SK-N-SH (cell line): ENCODE measurements at regions of chr3 and their contacts with region 1.

Region 1: DNA sequence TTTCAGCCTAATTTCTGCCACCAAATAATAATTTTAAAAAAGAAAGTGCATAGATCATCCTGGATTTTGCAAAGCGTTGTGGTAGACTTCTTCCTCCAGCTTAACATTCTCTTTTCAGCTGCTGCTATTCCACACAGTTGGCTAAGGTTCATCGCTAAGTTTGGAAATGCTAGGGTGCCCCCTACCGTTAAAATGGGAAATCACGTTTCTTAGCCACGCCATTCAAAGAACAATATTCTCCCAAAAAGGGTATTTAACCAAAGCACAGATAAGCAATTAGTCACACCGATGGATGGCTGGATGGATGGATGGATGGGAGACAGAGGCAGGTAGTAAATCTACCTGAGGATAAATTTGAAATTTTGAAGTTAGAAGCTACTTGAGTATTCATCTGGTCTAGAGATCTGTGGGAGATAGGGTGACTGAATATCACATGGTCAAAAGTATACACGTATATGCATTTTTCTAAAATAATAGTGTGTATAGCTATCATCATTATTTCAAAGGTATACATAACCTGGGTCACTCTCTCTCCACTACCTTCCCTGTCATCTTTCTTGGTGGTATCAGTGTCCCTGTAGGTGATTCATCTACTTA is 67.2 kb downstream of the EFHB start:
- DNase-seq: peak; percentile 61
- H3K4me3 ChIP-seq: peak overlapping the region in 1 of 2 experiments; percentile 46; a peak in 1 of 4 replicates
- H3K27ac ChIP-seq: no peak overlapping the region
- H3K4me1 ChIP-seq: no peaks in the 10 kb centered on the region
- H3K27me3 ChIP-seq: no peaks in the 10 kb centered on the region
- CTCF ChIP-seq: peak; percentile 83
- EP300 ChIP-seq: no peak
- RAD21 ChIP-seq: peak; percentile 90

Region 2: DNA sequence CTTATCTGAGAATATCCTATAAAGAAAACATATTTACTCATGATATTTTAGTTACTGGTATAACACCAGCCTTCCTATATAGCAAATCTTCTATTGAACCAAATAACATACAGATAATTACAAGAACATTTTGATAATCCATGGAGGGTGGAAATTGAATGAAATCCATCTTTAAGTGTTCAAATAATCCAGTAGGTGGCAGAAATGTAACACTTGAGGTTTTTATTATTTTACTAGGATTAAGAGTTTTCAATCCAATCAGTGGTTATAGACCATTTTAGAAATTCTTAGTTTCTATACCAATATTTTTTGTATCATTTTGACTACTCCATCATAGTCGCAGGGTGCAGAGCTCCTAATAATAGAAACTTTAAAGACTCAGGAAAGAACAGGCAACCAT is 820.4 kb before region 1 on chr3:
- CTCF ChIA-PET with region 1: interaction called, 14 read pairs
- POLR2A ChIA-PET with region 1: no interaction called
- DNase-seq: peak; percentile 10
- H3K4me3 ChIP-seq: no peak overlapping the region
- H3K27ac ChIP-seq: no peak overlapping the region
- H3K4me1 ChIP-seq: no peaks in the 10 kb centered on the region
- H3K27me3 ChIP-seq: no peaks in the 10 kb centered on the region
- CTCF ChIP-seq: peak; percentile 52
- EP300 ChIP-seq: no peak
- RAD21 ChIP-seq: peak; percentile 58

Region 3: DNA sequence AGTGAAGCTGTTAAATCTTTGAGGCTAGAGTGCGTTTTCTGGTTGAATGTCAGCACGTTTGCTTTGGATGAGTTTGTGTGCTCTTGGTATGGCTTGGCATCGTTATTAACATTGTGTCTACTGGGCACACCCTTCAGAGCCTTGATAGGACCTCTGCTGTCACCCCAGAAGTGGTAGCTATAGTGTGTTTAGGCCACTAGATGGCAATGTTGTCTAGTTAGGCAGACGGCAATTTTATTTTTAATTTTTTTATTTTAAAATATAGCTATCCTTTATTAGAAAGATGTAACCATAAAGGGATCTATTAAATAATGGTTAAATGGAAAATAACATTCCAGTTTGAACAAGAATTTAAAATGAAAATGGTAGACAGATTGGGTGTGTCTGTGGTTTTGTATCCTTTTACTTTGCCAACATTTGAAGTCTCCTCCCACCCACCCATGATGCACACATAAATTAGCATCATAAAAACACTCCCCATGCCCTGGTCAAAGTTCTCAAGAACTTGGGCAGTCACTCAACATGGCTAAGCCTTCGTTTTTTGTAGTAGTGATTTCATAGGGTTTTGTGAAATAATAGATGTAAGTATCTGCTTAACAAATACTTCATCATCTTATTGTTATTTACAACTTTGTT is 517.8 kb before region 1 on chr3:
- CTCF ChIA-PET with region 1: interaction called, 25 read pairs
- POLR2A ChIA-PET with region 1: no interaction called
- DNase-seq: peak; percentile 20
- H3K4me3 ChIP-seq: no peak overlapping the region; a peak in 1 of 4 replicates
- H3K27ac ChIP-seq: no peak overlapping the region
- H3K4me1 ChIP-seq: no peaks in the 10 kb centered on the region; a peak in 2 of 4 replicates
- H3K27me3 ChIP-seq: no peaks in the 10 kb centered on the region
- CTCF ChIP-seq: peak; percentile 67
- EP300 ChIP-seq: no peak
- RAD21 ChIP-seq: peak; percentile 72

Region 4: DNA sequence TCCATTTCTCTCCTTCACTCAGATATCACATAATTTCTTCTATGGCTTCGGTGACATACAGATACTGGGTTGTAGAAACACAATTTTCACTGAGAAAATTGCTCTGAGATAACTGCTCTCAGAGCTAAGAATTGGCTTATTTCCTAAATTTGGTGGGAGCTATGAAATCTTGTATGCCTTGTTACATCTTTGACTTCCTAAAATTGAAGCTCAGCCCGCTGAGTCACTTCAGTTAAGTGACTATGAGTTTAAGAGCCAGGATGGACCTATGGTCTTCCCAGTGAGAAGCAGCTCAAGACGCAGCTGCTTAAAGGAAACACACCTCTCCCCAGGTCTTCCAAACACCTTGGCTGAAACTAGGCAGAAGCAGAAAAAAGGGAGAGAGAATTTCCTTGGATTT is 10.8 kb after region 1 on chr3:
- CTCF ChIA-PET with region 1: interaction called, 15 read pairs
- POLR2A ChIA-PET with region 1: interaction called, 3 read pairs
- DNase-seq: no peak
- H3K4me3 ChIP-seq: no peak overlapping the region
- H3K27ac ChIP-seq: no peak overlapping the region
- H3K4me1 ChIP-seq: no peaks in the 10 kb centered on the region
- H3K27me3 ChIP-seq: no peaks in the 10 kb centered on the region
- CTCF ChIP-seq: no peak
- EP300 ChIP-seq: no peak
- RAD21 ChIP-seq: no peak

Region 5: GRCh38 chr3:19891740-19892139 is 24.9 kb after region 1 on chr3:
- CTCF ChIA-PET with region 1: interaction called, 17 read pairs
- POLR2A ChIA-PET with region 1: no interaction called
- DNase-seq: no peak
- H3K4me3 ChIP-seq: no peak overlapping the region
- H3K27ac ChIP-seq: no peak overlapping the region
- H3K4me1 ChIP-seq: peaks cover 0 to 22% of the 10 kb centered on the region in 2 experiments; a peak in 2 of 4 replicates
- H3K27me3 ChIP-seq: no peaks in the 10 kb centered on the region
- CTCF ChIP-seq: no peak
- EP300 ChIP-seq: no peak
- RAD21 ChIP-seq: no peak

Region 6: DNA sequence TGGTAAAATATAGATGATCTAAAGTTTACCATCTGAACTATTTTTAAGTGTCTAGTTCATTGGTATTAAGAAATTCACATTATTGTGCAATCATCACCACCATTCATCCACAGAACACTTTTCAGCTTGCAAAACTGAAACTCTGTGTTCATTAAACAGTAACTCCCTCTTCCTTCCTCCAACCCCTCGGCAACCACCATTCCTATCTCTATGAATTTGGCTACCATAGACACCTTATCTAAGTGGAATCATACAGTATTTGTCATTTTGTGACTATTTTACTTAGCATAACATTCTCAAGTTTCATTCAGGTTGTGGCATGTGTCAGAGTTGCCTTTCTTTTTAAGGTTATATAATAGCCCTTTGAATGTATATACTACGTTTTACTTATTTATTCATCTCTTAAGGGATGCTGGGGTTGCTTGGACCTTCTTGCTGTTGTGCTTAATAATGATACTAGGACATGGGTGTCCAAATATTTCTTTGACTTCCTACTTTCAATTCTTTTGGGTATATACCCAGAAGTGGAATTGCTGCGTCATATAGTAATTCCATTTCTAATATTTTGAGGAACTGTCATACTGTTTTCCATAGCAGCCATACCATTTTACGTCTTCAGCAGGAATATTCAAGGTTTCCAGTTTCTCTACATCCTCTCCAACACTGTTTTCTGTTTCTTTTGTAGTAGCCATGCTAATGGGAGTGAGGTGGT is 194.3 kb after region 1 on chr3:
- CTCF ChIA-PET with region 1: no interaction called
- POLR2A ChIA-PET with region 1: no interaction called
- DNase-seq: no peak
- H3K4me3 ChIP-seq: no peak overlapping the region
- H3K27ac ChIP-seq: no peak overlapping the region
- H3K4me1 ChIP-seq: peaks cover 7 to 16% of the 10 kb centered on the region in 2 experiments; a peak in 3 of 4 replicates
- H3K27me3 ChIP-seq: no peaks in the 10 kb centered on the region
- CTCF ChIP-seq: no peak
- EP300 ChIP-seq: no peak
- RAD21 ChIP-seq: no peak